ENCODE measurements at regions of chr15 and their contacts with region 1.

Region 1: DNA sequence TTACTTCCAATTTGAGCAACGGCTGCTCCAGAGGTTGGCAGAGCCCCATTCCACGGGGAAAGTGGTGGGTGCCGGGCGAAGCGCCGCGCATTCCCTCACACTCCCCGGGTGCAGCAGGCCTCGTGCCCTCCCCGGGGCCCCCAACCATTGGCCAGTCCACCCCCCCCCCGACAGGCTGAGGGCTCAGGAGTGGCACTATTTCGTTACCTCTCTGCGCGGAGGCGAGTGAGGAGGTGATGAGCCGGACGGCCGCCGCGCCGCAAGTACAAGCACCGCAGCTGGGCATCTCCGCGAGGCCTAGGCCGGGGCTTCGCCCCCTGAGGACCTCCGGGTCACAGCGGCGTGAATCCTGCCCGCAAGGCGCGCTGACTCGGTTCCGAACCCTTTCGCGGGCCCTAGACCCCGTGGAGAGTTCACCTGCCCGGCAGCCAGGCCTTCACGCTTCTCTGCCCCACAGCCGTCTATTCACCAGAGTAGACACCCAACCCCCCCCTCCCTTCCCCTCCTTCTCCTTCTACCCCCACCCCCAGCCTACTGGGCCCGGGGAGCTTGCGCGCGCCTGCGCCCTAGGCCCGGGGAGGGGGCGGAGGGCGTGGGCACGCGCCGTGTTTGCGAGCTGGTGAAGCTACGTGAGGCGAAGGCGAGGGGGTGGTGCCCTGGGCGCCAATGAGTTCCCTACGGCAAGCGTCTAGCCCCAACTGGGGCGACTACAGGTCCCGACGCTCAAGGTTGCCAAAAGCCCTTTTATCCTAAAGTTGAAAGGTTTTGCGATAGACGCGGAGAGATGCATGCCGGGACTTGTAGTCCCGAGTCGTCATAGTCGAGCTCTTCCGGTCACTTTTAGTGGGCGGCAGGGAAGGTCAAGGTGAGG is at the start of gene CLPX:
- DNase-seq: peak; percentile 41
- H3K4me3 ChIP-seq: peak within 1 kb of the TSS; percentile 91
- CTCF ChIP-seq: no peak

Region 2: GRCh38 chr15:65264863-65265430 is 79.8 kb after region 1 on chr15:
- CTCF ChIA-PET with region 1: interaction called, 208 read pairs
- POLR2A ChIA-PET with region 1: no interaction called
- DNase-seq: no peak
- H3K4me3 ChIP-seq: no peak overlapping the region
- CTCF ChIP-seq: no peak

Region 3: DNA sequence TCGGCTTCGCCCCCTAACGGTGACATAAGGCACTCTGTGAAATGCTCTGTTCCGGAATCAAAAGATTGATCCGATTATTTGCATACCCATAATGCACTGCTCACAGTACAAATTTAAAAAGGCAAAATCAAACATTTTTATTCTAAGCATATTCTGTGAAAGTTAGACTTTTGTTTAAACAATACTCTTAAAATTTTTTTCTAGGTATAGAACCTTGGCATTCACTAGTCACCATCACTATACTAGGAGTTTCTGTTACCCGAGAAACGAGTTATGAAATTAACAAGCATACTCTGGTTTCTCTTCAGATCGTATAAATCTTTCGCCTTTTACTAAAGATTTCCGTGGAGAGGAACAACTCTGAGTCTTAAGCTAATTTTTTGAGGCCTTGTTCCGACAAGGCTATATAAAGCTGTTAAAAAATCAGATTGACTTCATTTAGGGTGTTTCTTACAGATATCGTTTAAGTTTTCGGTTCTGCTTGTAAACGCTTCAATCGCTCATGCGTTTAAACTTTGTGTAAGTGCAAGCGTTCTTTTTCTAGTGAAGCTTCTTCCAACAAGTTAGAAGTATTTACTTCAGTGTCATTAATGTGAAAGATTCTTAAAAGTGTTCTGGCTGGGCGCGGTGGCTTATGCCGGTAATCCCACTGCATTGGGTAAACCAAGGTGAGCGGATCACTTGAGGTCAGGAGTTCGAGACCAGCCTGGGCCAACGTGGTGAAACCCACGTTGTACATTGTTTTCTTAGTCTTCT is 119.5 kb after region 1 on chr15 and contains the start of gene RNU5B-1:
- CTCF ChIA-PET with region 1: interaction called, 133 read pairs
- POLR2A ChIA-PET with region 1: interaction called, 24 read pairs
- DNase-seq: peak; percentile 96
- H3K4me3 ChIP-seq: peak within 1 kb of the TSS; percentile 56
- CTCF ChIP-seq: peak; percentile 85

Measured in AG04449 (cell line).